GM10248 (cell line): ENCODE measurements at regions of chr19 and their contacts with region 1.

Region 1: GRCh38 chr19:43754503-43755255 is at the start of gene SMG9:
- DNase-seq: peak; percentile 93
- CTCF ChIP-seq: no peak

Region 2: GRCh38 chr19:43555185-43555770 is 199.4 kb before region 1 on chr19:
- CTCF ChIA-PET with region 1: no interaction called
- POLR2A ChIA-PET with region 1: no interaction called
- DNase-seq: peak; percentile 80
- CTCF ChIP-seq: peak; percentile 88

Region 3: GRCh38 chr19:43723588-43723987 is 31.1 kb before region 1 on chr19:
- CTCF ChIA-PET with region 1: no interaction called
- POLR2A ChIA-PET with region 1: no interaction called
- DNase-seq: no peak
- CTCF ChIP-seq: no peak

Region 4: GRCh38 chr19:43784981-43785808 is 30.5 kb after region 1 on chr19:
- CTCF ChIA-PET with region 1: interaction called, 234 read pairs
- POLR2A ChIA-PET with region 1: no interaction called
- DNase-seq: peak; percentile 71
- CTCF ChIP-seq: peak; percentile 92

Region 5: DNA sequence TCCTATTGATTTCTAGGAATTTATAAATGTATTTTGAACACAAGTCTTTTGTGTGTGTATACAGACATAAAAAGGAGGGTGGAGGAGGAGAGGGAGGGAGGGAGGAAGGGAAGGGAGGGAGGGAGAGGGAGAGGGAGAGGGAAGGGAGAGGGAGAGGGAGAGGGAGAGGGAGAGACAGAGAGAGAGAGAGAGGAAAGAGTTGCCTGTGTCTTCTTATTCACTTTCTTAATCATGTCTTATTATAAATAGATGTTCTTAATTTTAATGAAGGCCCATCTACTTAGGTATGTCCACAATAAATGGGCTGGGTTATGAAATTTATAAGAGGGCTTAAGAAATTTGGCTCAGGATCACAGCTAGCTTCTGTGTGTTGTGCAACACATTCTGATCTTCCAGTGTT is 141.0 kb after region 1 on chr19:
- CTCF ChIA-PET with region 1: no interaction called
- POLR2A ChIA-PET with region 1: no interaction called
- DNase-seq: no peak
- CTCF ChIP-seq: no peak